Left colon (tissue), 2 donors: ENCODE measurements at regions of chr1 and their contacts with region 1.

Region 1: DNA sequence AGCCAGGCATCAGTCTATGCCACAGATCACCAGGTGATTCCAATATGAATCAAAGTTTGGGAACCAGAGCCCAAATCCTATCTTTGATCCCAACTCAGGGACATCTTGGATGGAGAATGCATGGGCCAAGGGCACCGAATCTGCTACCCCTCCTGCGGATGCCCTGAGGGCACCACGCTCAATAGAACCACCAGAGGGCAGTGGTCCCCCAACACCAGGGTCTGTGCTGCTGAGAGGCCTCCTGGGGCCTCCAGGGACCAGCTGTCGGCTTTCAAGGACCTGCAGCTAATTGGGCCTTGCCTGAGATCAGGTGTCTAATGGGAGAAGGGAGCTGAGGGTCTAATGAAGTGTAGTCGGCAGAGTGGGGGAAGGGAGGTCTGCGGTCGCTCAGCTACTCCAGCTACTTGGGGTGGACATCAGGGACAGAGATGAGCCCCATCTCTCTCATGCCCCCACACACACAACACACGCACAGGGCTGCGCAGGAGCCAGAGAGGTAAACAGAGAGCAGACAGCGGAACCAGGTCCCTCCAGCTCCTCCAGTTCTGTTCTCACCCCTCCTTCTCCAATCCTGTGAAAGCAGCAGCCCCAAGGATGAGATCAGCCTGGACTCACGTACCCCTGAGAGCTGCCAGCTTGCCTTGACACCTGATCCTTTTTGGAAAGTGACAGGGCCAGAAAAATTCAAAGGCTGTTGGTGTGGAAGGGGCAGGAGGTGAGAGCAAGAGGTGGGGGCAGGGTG is 34.9 kb upstream of the PPP1R15B start:
- DNase-seq: peak; percentile 71 to 81
- ATAC-seq: peak; percentile 24

Region 2: GRCh38 chr1:204494281-204495077 is 47.9 kb after region 1 on chr1 and contains the start of gene PIK3C2B:
- intact Hi-C with region 1: loop called in 1 of 2 experiments (anchors 5 kb)
- DNase-seq: peak; percentile 84 to 85
- ATAC-seq: peak; percentile 75
- total RNA-seq, gene PIK3C2B: 78.5 to 82.0 TPM

Region 3: DNA sequence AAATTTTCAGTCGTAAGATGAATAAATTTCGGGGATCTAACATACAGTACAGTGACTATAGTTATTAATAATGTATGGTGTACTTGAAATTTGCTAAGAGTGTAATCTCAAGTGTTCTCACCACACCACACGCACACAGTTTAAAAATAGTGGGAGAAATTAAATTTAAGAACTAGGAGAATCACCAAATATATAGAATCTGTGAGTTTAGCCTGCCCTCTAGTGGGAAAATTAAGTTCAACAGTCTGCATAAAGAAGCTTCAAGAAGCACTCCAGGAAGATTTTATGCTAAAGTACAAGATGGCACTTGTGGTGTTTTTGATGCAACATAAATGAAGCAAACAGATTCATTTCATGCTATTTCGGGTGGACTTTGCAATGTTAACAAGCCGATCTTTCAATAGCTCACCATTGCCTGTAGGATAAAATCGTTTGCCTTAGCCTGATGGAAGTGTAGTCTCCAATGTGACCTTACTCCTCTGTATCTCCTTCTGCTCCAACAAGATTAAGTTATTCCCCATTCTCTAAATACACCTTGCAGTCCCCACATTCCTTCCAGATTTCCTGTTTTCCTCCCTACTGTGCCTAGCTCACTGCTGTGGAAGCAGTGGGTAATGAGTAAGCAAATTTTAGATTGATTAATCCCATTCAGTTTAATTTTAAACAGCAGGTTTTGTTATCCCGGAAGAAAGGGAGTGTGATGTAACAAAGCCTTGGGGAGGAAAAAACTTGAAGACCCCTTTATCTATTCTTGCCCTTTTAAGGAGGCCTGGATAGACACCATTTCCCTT is 56.8 kb after region 1 on chr1:
- intact Hi-C with region 1: loop called (anchors 5 kb)
- DNase-seq: no peak
- ATAC-seq: peak; percentile 22

Region 4: GRCh38 chr1:204670152-204670927 is 223.8 kb after region 1 on chr1:
- intact Hi-C with region 1: no loop called
- DNase-seq: no peak
- ATAC-seq: no peak